ENCODE measurements at regions of chr11 and their contacts with region 1.

Region 1: DNA sequence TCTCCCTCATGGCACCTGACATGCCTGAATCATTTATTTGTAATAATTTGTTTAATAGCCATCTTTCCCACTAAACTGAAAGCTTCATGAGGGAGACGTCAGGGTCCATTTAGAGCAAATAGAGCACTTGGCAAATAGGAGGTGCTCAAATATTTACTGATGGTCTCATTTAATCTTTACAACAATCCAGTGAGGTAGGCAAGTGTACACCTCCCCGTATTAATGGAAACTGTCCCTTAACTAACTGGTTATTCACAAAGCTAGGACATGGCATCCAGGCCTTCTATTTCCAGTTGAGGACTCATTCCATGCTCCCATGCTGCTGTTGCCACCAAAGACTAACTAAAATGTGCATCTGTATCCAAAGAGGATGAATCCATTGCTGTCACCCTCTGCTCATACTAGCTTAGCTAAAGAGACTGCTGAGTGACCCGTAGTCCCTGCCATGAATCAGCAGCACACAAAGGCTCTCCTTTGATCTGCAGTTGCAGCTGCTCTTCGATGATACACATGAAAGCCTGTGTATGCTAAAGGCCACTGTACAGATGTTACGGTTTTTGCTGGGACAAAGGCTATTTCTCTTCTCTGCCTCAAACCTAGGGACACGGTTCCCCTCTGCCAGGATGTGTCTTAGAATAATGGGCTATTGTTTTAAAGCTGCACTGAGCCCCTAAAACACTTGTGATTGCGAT is 82.6 kb downstream of the RAB30 start:
- DNase-seq: no peak
- ATAC-seq: no peak
- H3K4me3 Mint-ChIP-seq: no peak overlapping the region
- H3K27ac Mint-ChIP-seq: no peak overlapping the region
- H3K4me1 Mint-ChIP-seq: peaks cover under 1% of the 10 kb centered on the region
- H3K27me3 Mint-ChIP-seq: no peaks in the 10 kb centered on the region

Region 2: GRCh38 chr11:82750643-82751139 is 238.4 kb before region 1 on chr11:
- CTCF ChIA-PET with region 1: no interaction called
- POLR2A ChIA-PET with region 1: no interaction called
- DNase-seq: peak; percentile 44
- ATAC-seq: peak; percentile 82
- H3K4me3 Mint-ChIP-seq: peak overlapping the region; percentile 22
- H3K27ac Mint-ChIP-seq: peak overlapping the region; percentile 4
- H3K4me1 Mint-ChIP-seq: peaks cover 16% of the 10 kb centered on the region
- H3K27me3 Mint-ChIP-seq: peaks cover 17% of the 10 kb centered on the region

Region 3: DNA sequence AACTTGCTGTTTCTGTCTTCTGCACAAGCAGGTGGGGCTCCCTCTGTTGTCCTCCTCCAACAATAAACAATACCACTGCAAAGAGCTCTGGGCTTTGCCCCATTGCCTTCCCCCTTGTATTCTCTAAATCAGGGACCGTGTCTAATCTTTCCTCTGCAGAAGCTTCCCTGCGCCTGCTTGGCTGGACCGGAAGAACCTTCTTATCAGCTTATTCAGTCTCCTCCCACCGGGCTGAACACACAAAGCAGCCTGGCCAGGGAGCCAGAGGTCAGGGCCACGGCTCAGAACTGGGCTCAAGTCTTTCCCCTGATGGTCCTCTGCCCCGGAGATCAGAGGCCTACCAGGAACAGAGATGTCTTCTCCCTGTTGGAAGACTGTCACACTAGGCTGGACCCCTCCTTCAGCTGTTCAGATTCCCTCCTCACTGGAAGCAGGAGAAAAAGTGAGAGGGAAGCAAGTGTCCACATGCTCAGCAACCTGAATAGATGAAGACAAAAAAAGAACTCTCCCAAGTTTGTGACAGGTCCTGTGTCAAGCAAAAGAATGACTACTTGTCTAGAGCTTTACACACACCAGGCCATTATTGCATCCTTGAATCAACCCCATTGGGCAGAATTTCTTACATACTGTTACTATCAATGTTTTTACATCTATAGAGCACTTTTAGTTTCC is 19.0 kb after region 1 on chr11:
- CTCF ChIA-PET with region 1: interaction called, 10 read pairs
- POLR2A ChIA-PET with region 1: no interaction called
- DNase-seq: no peak
- ATAC-seq: no peak
- H3K4me3 Mint-ChIP-seq: no peak overlapping the region
- H3K27ac Mint-ChIP-seq: peak overlapping the region; percentile 16
- H3K4me1 Mint-ChIP-seq: peaks cover 42% of the 10 kb centered on the region
- H3K27me3 Mint-ChIP-seq: no peaks in the 10 kb centered on the region

Region 4: GRCh38 chr11:83033972-83034672 is 45.0 kb after region 1 on chr11:
- CTCF ChIA-PET with region 1: no interaction called
- POLR2A ChIA-PET with region 1: no interaction called
- DNase-seq: no peak
- ATAC-seq: no peak
- H3K4me3 Mint-ChIP-seq: no peak overlapping the region
- H3K27ac Mint-ChIP-seq: no peak overlapping the region
- H3K4me1 Mint-ChIP-seq: peaks cover 31% of the 10 kb centered on the region
- H3K27me3 Mint-ChIP-seq: no peaks in the 10 kb centered on the region

Region 5: GRCh38 chr11:83051760-83052671 is 62.9 kb after region 1 on chr11:
- CTCF ChIA-PET with region 1: no interaction called
- POLR2A ChIA-PET with region 1: no interaction called
- DNase-seq: no peak
- ATAC-seq: no peak
- H3K4me3 Mint-ChIP-seq: no peak overlapping the region
- H3K27ac Mint-ChIP-seq: no peak overlapping the region
- H3K4me1 Mint-ChIP-seq: peaks cover 37% of the 10 kb centered on the region
- H3K27me3 Mint-ChIP-seq: no peaks in the 10 kb centered on the region